ENCODE measurements at regions of chr11 and their contacts with region 1.

Region 1: GRCh38 chr11:119666463-119667131 is 62.4 kb downstream of the NECTIN1 start:
- DNase-seq: peak; percentile 36 to 61
- ATAC-seq: peak; percentile 82 to 93
- H3K4me3 ChIP-seq: no peak overlapping the region
- H3K27ac ChIP-seq: no peak overlapping the region
- H3K4me1 ChIP-seq: peaks cover 0 to 4% of the 10 kb centered on the region in 2 donors
- H3K27me3 ChIP-seq: no peaks in the 10 kb centered on the region
- CTCF ChIP-seq: peak; percentile 89 to 95 (median 94)
- POLR2A ChIP-seq: no peak

Region 2: GRCh38 chr11:119728651-119729580 is 62.3 kb after region 1 on chr11 and contains the start of gene NECTIN1:
- in situ Hi-C with region 1: loop called in 1 of 4 experiments (anchors 10 kb)
- intact Hi-C with region 1: loop called (anchors 1 kb)
- DNase-seq: peak; percentile 67 to 68
- ATAC-seq: peak; percentile 95 to 97
- H3K4me3 ChIP-seq: peak within 1 kb of the TSS; percentile 57 to 99 (median 79)
- H3K27ac ChIP-seq: peak within 1 kb of the TSS; percentile 52 to 79 (median 74)
- H3K4me1 ChIP-seq: peaks cover 3 to 18% of the 10 kb centered on the region in 2 donors
- H3K27me3 ChIP-seq: peaks cover 13 to 15% (median 14%) of the 10 kb centered on the region in 3 donors
- CTCF ChIP-seq: peak; percentile 68 to 98 (median 88)
- POLR2A ChIP-seq: peak; percentile 59 to 81
- total RNA-seq, gene NECTIN1: 0.66 to 2.2 (median 0.92) TPM

Region 3: DNA sequence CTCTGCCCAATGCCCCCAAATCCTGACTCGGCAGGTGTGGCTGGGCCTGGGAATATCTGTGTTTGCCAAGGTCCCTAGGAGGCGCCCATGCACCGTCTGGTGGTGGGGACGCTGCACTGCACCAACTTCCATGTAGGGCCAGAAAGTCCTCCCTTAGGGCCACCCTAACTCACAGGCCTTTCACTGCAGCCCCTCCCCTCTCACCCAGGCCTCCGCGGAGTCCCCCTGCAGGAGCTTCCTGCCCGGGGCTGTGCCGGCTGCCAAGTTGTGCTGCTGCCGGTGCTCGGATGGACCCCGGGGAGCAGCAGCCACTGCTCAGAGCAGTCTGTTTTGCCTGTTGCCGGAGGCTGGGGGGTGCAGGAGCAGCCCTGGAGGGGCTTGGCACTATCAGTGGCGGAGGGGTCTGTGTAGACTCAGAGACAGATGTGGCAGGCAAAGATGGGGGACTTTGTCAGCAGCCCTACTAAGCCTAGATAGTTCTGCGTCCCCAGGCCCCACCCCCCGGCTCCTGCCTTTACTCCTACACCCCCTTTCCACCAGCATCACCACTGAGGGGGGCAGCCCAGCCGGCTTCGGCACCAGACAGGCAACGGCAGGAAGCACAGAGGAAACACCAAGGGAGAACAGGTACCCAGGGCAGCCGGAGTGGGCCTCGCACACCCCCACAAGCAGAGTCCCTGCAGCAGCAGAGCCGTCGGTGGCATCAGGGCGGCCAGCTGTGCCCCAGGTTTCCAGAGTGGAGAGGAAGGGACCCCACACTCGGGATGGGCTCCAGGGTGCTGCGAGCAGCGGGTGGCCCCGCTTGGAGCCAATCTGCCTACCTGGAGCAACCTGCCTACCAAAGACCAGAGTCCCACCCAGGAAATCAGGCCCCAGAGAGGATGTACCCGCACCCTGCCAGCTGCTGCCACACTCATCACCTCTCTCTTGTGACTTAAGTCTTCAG is 347.0 kb after region 1 on chr11:
- in situ Hi-C with region 1: no loop called
- intact Hi-C with region 1: loop called (anchors 2 kb)
- DNase-seq: no peak
- ATAC-seq: no peak
- H3K4me3 ChIP-seq: no peak overlapping the region
- H3K27ac ChIP-seq: no peak overlapping the region
- H3K4me1 ChIP-seq: no peaks in the 10 kb centered on the region
- H3K27me3 ChIP-seq: peaks cover 4 to 25% (median 22%) of the 10 kb centered on the region in 3 donors
- CTCF ChIP-seq: peak; percentile 12 to 54 (median 49)
- POLR2A ChIP-seq: no peak

Region 4: GRCh38 chr11:120108154-120108865 is 441.7 kb after region 1 on chr11:
- in situ Hi-C with region 1: loop called (anchors 10 kb)
- intact Hi-C with region 1: no loop called
- DNase-seq: peak; percentile 31 to 37
- ATAC-seq: peak; percentile 66 to 78
- H3K4me3 ChIP-seq: no peak overlapping the region
- H3K27ac ChIP-seq: no peak overlapping the region
- H3K4me1 ChIP-seq: no peaks in the 10 kb centered on the region
- H3K27me3 ChIP-seq: no peaks in the 10 kb centered on the region
- CTCF ChIP-seq: peak; percentile 87 to 98 (median 94)
- POLR2A ChIP-seq: no peak

Region 5: DNA sequence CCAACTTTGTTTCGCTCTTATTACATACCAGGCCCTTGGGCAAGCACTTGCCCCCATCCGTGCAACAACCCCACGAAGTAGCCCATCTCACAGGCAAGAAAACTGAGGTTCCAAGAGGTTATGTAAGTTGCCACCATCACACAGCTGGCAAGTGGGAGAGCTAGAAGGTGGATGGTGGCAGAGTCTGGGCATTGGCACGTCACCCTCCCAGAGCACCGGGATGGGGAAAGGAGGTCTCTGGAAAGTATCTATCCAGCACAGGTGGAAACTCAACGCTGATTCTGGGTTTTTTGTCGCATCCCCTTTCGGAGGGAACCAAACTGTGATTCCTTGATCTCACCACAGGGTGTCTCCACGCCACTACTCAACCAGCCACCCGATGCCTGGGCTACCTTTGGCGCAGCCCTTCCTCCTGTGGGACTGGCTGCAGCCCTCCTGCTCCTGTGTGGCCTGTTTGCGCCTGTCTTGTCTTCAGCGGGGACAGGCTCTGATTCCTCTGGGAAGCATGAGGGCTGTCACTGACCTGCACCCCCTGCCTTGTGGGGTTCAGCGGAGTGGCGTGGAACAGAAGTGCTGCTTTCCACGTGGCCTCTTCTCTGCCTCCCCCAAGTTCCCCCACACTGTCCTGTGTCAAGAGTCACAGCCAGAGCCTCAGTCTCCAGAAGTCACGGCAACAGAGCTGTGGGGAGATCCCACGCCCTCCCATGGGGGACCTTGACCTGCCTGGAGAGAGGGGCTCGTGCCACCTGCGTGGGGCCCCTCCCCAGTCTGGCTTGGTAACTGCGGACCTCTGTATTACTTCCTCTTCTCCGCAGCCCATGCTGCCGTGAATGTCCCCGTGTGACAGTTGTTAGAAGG is 505.7 kb after region 1 on chr11:
- in situ Hi-C with region 1: no loop called
- intact Hi-C with region 1: loop called (anchors 2 kb)
- DNase-seq: peak; percentile 38 to 46
- ATAC-seq: peak; percentile 28 to 70
- H3K4me3 ChIP-seq: no peak overlapping the region
- H3K27ac ChIP-seq: no peak overlapping the region
- H3K4me1 ChIP-seq: peaks cover 0 to 4% of the 10 kb centered on the region in 2 donors
- H3K27me3 ChIP-seq: peaks cover 25 to 28% (median 27%) of the 10 kb centered on the region in 3 donors
- CTCF ChIP-seq: peak; percentile 66 to 80 (median 77)
- POLR2A ChIP-seq: no peak

Region 6: DNA sequence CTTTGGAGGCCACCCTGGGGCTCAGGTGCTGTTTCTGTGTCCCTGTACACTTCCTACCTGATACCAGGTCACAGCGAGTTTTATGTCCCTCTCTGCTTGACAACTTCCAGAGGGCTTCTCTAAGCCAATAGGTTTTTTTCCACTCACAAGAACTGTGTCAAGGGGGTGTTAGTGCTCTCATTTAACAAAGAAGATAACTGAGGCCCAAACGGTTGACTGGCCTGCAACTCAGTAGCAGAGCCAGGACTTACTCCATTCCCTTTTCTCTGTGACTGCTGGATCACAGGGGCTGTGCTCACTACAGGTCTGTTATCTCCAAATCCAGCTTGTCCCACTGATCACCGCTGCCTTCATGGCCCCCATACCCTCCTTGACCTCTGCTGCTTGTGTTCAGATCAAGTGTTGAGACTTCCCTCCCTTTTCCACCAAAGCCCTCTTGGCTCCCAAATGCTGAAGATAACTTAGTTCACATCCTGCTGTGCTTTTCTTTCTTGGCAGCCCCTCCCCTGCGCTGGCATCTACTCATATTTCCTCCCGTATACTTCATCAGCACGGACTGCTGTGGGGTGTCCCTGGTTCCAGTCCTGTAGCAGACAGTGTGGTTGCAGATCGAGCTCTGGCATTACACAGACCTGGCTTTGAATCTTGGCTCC is 614.7 kb after region 1 on chr11:
- in situ Hi-C with region 1: loop called in 1 of 4 experiments (anchors 25 kb)
- intact Hi-C with region 1: no loop called
- DNase-seq: no peak
- ATAC-seq: no peak
- H3K4me3 ChIP-seq: no peak overlapping the region
- H3K27ac ChIP-seq: no peak overlapping the region
- H3K4me1 ChIP-seq: peaks cover 0 to 8% of the 10 kb centered on the region in 2 donors
- H3K27me3 ChIP-seq: no peaks in the 10 kb centered on the region
- CTCF ChIP-seq: no peak
- POLR2A ChIP-seq: no peak

Measured in gastrocnemius medialis (tissue), 4 donors.